MCF 10A (cell line): ENCODE measurements at regions of chr17 and their contacts with region 1.

Region 1: DNA sequence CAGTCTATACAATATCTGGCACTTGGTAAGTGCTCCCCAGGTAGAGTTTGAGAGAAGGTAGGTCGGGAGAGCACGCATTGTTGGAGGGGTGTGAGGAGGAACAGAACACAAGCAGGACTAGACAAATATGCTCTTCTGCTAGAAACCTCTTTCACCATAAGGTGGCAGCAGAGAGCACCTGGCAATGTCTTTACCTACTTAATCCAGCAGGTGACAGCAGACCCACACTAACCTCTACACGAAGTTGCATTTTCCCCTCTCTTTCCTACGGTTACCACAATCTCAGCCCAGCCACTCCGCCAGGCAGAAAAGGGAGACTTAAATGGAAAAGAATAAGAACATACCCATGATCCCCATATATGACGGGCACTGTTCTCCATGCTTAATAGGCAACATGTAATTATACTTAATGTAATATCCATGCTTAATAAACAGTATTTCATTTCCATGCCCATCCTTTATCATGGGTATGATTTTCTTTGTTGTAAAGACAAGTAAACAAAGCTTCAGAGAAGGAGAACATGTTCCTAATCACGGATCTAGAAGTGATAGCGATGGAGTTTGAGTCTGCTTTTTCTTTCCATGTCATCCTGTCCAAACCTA is 55.1 kb upstream of the CCL2 start:
- DNase-seq: peak; percentile 79
- H3K4me3 Mint-ChIP-seq: no peak overlapping the region
- H3K27ac Mint-ChIP-seq: no peak overlapping the region
- H3K4me1 Mint-ChIP-seq: no peaks in the 10 kb centered on the region
- H3K27me3 Mint-ChIP-seq: peaks cover 15% of the 10 kb centered on the region
- CTCF ChIP-seq: peak; percentile 100

Region 2: GRCh38 chr17:34235389-34236028 is 35.5 kb after region 1 on chr17:
- CTCF ChIA-PET with region 1: interaction called, 11 read pairs
- POLR2A ChIA-PET with region 1: no interaction called
- intact Hi-C with region 1: no loop called
- DNase-seq: no peak
- H3K4me3 Mint-ChIP-seq: no peak overlapping the region
- H3K27ac Mint-ChIP-seq: no peak overlapping the region
- H3K4me1 Mint-ChIP-seq: no peaks in the 10 kb centered on the region
- H3K27me3 Mint-ChIP-seq: no peaks in the 10 kb centered on the region
- CTCF ChIP-seq: no peak

Region 3: GRCh38 chr17:34254651-34255380 is 54.8 kb after region 1 on chr17 and contains the start of gene CCL2:
- CTCF ChIA-PET with region 1: interaction called, 10 read pairs
- POLR2A ChIA-PET with region 1: no interaction called
- intact Hi-C with region 1: loop called (anchors 10 kb)
- DNase-seq: peak; percentile 10
- H3K4me3 Mint-ChIP-seq: peak within 1 kb of the TSS; percentile 64
- H3K27ac Mint-ChIP-seq: peak within 1 kb of the TSS; percentile 60
- H3K4me1 Mint-ChIP-seq: peaks cover 46% of the 10 kb centered on the region
- H3K27me3 Mint-ChIP-seq: no peaks in the 10 kb centered on the region
- CTCF ChIP-seq: no peak
- total RNA-seq, gene CCL2: 0.59 and 1.0 TPM in 2 replicates

Region 4: DNA sequence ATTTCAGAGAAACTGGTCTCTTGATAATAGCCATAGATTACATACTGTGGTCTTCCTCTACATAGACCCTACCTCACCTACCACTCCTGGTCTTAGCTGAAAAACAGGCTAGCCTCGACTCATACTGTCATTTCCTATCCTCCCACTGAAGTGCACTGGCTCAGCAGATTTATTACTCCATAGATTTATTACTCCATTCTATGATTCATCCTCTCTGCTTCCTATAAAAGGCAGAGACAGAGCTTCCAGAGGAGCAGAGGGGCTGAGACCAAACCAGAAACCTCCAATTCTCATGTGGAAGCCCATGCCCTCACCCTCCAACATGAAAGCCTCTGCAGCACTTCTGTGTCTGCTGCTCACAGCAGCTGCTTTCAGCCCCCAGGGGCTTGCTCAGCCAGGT is 69.9 kb after region 1 on chr17 and contains the start of gene CCL7:
- CTCF ChIA-PET with region 1: no interaction called
- POLR2A ChIA-PET with region 1: no interaction called
- intact Hi-C with region 1: loop called (anchors 10 kb)
- DNase-seq: no peak
- H3K4me3 Mint-ChIP-seq: no peak within 1 kb of the TSS
- H3K27ac Mint-ChIP-seq: no peak within 1 kb of the TSS
- H3K4me1 Mint-ChIP-seq: peaks cover 6% of the 10 kb centered on the region
- H3K27me3 Mint-ChIP-seq: peaks cover 21% of the 10 kb centered on the region
- CTCF ChIP-seq: no peak
- total RNA-seq, gene CCL7: not detected in 2 replicates

Region 5: DNA sequence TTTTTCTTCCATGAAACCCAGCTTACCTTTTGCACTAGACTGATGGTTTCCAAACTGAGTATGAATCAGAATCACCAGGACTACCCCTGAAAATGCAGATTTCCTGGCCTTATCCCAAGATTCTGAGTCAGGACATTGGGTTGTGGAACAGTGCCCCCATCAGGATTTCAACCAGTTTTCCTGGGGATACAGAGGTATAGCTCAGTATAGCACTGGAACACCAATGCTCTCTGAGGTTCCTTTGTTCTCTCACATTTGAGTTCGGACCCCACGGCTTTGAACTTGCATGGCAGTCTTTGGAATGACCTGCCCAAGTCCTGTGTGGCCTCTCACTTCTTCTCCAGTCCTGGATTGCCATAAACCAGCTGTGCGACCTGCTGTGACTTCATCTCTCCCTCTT is 106.4 kb after region 1 on chr17:
- CTCF ChIA-PET with region 1: interaction called, 13 read pairs
- POLR2A ChIA-PET with region 1: no interaction called
- intact Hi-C with region 1: loop called (anchors 1 kb)
- DNase-seq: peak; percentile 3
- H3K4me3 Mint-ChIP-seq: no peak overlapping the region
- H3K27ac Mint-ChIP-seq: no peak overlapping the region
- H3K4me1 Mint-ChIP-seq: peaks cover 5% of the 10 kb centered on the region
- H3K27me3 Mint-ChIP-seq: no peaks in the 10 kb centered on the region
- CTCF ChIP-seq: peak; percentile 32

Region 6: GRCh38 chr17:34769049-34769448 is 569.0 kb after region 1 on chr17:
- CTCF ChIA-PET with region 1: no interaction called
- POLR2A ChIA-PET with region 1: no interaction called
- intact Hi-C with region 1: no loop called
- DNase-seq: no peak
- H3K4me3 Mint-ChIP-seq: no peak overlapping the region
- H3K27ac Mint-ChIP-seq: no peak overlapping the region
- H3K4me1 Mint-ChIP-seq: no peaks in the 10 kb centered on the region
- H3K27me3 Mint-ChIP-seq: no peaks in the 10 kb centered on the region
- CTCF ChIP-seq: no peak